K562 (cell line): ENCODE measurements at regions of chr16 and their contacts with region 1.

Region 1: DNA sequence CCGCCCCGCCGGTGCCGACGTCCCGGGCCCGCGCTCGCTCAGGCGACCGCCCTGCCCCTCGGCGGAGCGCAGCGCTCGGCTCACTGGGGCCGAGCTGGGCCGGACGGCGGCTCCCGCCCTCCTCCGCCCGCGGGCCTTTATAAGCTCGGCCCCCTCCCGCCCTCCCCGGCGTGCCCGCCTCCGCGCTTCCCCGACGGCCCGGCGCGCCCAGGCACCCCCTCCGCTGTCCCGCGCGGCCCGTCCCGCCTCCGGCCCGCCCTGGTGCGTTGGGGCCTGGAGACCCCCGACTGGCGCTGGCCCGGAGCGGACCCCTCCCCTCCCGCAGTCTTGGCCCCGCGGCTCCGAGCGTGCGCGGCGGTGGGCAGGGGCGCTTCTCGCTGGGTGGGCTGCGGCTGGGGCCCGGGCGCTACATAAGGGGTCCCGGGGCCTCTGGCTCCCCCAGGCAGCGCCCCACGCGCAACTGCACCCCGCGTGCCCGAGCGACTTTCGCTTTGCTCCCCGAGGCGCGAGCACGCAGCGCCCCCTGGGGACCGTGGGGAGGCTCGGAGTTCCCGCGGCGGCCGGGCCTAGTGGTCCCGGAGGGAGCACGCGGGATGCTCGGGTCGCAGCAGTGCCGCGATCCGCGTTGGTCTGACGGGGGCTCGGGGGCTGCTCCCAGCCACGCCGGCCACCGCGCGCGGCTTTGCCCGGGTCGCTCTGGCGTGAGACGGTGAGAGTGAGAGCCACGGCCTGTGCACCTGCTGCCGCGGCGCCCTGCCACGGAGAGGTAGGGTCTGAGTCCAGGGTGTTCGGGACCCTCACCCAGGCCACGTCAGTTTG is at the start of gene PIEZO1:
- DNase-seq: peak; percentile 84 to 93 (median 88)
- ATAC-seq: peak; percentile 57
- H3K4me3 ChIP-seq: peak within 1 kb of the TSS; percentile 70
- H3K27ac ChIP-seq: peak within 1 kb of the TSS; percentile 93
- H3K4me1 ChIP-seq: peaks cover 29 to 70% of the 10 kb centered on the region in 2 experiments
- H3K27me3 ChIP-seq: no peaks in the 10 kb centered on the region
- CTCF ChIP-seq: peak; percentile 90 to 97 (median 96)
- EP300 ChIP-seq: no peak; the same call in 1 of the 2 replicates
- POLR2A ChIP-seq: no peak
- RAD21 ChIP-seq: peak; percentile 98
- polyA plus RNA-seq, gene PIEZO1: 3.6 to 9.6 TPM

Region 2: GRCh38 chr16:88415713-88416323 is 369.5 kb before region 1 on chr16:
- CTCF ChIA-PET with region 1: no interaction called
- POLR2A ChIA-PET with region 1: no interaction called
- in situ Hi-C with region 1: no loop called
- intact Hi-C with region 1: no loop called
- DNase-seq: peak; percentile 54 to 64 (median 63)
- ATAC-seq: peak; percentile 74
- H3K4me3 ChIP-seq: no peak overlapping the region
- H3K27ac ChIP-seq: no peak overlapping the region
- H3K4me1 ChIP-seq: peaks cover 3 to 62% of the 10 kb centered on the region in 2 experiments; a peak in 3 of 5 replicates
- H3K27me3 ChIP-seq: peaks cover 0 to 59% of the 10 kb centered on the region in 2 experiments; a peak in 2 of 5 replicates
- CTCF ChIP-seq: peak; percentile 37 to 62 (median 59)
- EP300 ChIP-seq: no peak
- POLR2A ChIP-seq: no peak
- RAD21 ChIP-seq: peak in 1 of 2 experiments; percentile 28; a peak in 2 of 4 replicates

Region 3: GRCh38 chr16:88737298-88738150 is 47.8 kb before region 1 on chr16:
- CTCF ChIA-PET with region 1: interaction called, 51 read pairs
- POLR2A ChIA-PET with region 1: interaction called, 8 read pairs
- in situ Hi-C with region 1: no loop called
- intact Hi-C with region 1: loop called (anchors 2 kb)
- DNase-seq: peak; percentile 92 to 97 (median 93)
- ATAC-seq: peak; percentile 97
- H3K4me3 ChIP-seq: no peak overlapping the region
- H3K27ac ChIP-seq: no peak overlapping the region
- H3K4me1 ChIP-seq: peaks cover 0 to 94% of the 10 kb centered on the region in 2 experiments; a peak in 3 of 5 replicates
- H3K27me3 ChIP-seq: no peaks in the 10 kb centered on the region
- CTCF ChIP-seq: peak; percentile 97 to 99 (median 99)
- EP300 ChIP-seq: peak; percentile 35; the same call in 1 of the 2 replicates
- POLR2A ChIP-seq: peak; percentile 47
- RAD21 ChIP-seq: peak; percentile 93 to 94

Region 4: GRCh38 chr16:88743693-88744576 is 41.4 kb before region 1 on chr16:
- CTCF ChIA-PET with region 1: interaction called, 32 read pairs
- POLR2A ChIA-PET with region 1: interaction called, 5 read pairs
- in situ Hi-C with region 1: no loop called
- intact Hi-C with region 1: loop called (anchors 1 kb)
- DNase-seq: peak; percentile 78 to 93 (median 87)
- ATAC-seq: peak; percentile 81
- H3K4me3 ChIP-seq: no peak overlapping the region
- H3K27ac ChIP-seq: no peak overlapping the region
- H3K4me1 ChIP-seq: peaks cover 0 to 92% of the 10 kb centered on the region in 2 experiments; a peak in 2 of 5 replicates
- H3K27me3 ChIP-seq: no peaks in the 10 kb centered on the region
- CTCF ChIP-seq: peak; percentile 87 to 94 (median 87)
- EP300 ChIP-seq: no peak
- POLR2A ChIP-seq: no peak
- RAD21 ChIP-seq: peak; percentile 62 to 81

Region 5: GRCh38 chr16:88754912-88755744 is 30.2 kb before region 1 on chr16:
- CTCF ChIA-PET with region 1: interaction called, 5 read pairs
- POLR2A ChIA-PET with region 1: interaction called, 26 read pairs
- in situ Hi-C with region 1: no loop called
- intact Hi-C with region 1: no loop called
- DNase-seq: no peak
- ATAC-seq: no peak
- H3K4me3 ChIP-seq: no peak overlapping the region
- H3K27ac ChIP-seq: no peak overlapping the region
- H3K4me1 ChIP-seq: peaks cover 13 to 86% of the 10 kb centered on the region in 2 experiments; a peak in 4 of 5 replicates
- H3K27me3 ChIP-seq: no peaks in the 10 kb centered on the region
- CTCF ChIP-seq: no peak
- EP300 ChIP-seq: no peak
- POLR2A ChIP-seq: no peak
- RAD21 ChIP-seq: no peak

Region 6: DNA sequence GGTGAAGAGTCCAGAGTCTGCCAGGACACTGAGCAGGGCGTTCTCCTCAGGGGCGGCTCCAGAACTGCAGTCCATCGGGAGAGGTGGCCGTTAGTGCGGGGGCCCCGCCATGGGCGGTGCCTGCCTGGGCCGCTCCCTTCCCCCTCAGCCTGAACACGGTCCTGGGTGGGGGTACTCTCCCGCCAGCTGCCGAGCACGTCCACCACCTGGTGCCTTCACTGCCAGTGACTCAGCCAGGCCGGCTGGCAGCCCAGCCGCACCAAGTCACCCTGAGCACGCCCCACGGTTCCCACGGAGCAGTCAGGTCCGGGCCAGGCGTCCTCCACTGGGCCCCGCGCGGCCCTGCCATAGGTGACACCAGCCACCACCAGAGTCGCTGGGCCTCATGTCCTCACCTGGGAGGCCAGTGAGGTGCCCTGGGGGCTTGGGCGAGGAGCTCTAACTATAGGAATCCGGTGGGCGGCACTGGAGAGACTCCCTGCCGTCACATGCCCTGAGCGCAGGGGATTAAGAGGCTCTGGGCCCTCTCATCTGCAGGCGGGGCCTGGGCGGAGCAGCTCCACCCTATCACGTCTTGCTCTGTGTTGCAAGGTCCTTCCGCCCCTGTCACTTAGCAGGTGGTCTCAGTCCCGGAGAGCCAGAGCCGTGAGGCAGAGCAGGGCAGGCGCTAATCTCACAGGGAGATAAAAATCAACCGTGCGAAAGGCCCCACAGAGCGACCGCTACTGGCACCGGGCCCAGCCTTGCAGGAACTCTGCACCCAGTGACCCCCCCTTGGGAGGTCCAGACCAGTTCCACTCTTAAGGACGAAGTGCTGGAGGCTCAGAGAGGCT is 14.6 kb before region 1 on chr16:
- CTCF ChIA-PET with region 1: no interaction called
- POLR2A ChIA-PET with region 1: interaction called, 124 read pairs
- in situ Hi-C with region 1: no loop called
- intact Hi-C with region 1: loop called (anchors 1 kb)
- DNase-seq: peak; percentile 67 to 98 (median 80)
- ATAC-seq: peak; percentile 80
- H3K4me3 ChIP-seq: peak overlapping the region; percentile 38
- H3K27ac ChIP-seq: peak overlapping the region; percentile 91
- H3K4me1 ChIP-seq: peaks cover 75 to 100% of the 10 kb centered on the region in 2 experiments
- H3K27me3 ChIP-seq: no peaks in the 10 kb centered on the region
- CTCF ChIP-seq: peak in 2 of 3 experiments; percentile 14 to 26; a peak in 1 of 6 replicates
- EP300 ChIP-seq: peak; percentile 86
- POLR2A ChIP-seq: peak; percentile 74; the same call in 1 of the 2 replicates
- RAD21 ChIP-seq: peak; percentile 21 to 37

Region 7: DNA sequence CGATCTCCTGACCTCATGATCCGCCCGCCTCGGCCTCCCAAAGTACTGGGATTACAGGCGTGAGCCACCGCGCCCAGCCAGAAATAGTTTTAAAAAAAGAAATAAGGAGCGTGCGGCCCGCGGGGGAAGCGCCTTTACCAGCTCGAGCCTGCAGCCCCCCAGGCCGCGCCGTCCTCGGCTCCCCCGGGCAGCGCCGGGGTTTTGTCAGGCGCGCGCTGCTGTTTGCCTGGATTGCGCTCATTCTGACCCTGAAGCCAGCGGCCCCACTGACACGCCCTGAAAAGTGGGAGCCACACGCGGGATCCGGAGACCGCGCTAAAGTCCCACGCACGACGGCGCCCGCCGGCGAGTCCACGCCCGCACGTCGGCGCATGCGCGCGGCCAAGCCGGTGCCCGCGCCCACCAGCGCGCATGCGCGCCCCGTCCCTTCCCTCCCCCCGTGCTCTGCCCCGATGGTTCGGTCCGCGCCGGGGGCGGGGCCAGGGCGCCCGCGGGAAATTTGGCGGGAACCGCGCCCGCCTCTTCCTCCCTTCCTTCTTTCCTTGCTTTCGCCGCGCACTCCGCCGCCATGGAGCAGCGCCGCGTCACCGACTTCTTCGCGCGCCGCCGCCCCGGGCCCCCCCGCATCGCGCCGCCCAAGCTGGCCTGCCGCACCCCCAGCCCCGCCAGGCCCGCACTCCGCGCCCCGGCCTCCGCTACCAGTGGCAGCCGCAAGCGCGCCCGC is 18.1 kb after region 1 on chr16 and contains the start of gene CDT1:
- CTCF ChIA-PET with region 1: no interaction called
- POLR2A ChIA-PET with region 1: interaction called, 48 read pairs
- in situ Hi-C with region 1: no loop called
- intact Hi-C with region 1: no loop called
- DNase-seq: peak; percentile 91 to 99 (median 96)
- ATAC-seq: peak; percentile 6
- H3K4me3 ChIP-seq: peak within 1 kb of the TSS; percentile 89
- H3K27ac ChIP-seq: peak within 1 kb of the TSS; percentile 86
- H3K4me1 ChIP-seq: peaks cover 29 to 85% of the 10 kb centered on the region in 2 experiments
- H3K27me3 ChIP-seq: no peaks in the 10 kb centered on the region; a peak in 1 of 5 replicates
- CTCF ChIP-seq: no peak
- EP300 ChIP-seq: no peak
- POLR2A ChIP-seq: peak; percentile 71
- RAD21 ChIP-seq: no peak
- polyA plus RNA-seq, gene CDT1: 0.92 to 1.6 TPM